ENCODE measurements at regions of chr14 and their contacts with region 1.

Region 1: DNA sequence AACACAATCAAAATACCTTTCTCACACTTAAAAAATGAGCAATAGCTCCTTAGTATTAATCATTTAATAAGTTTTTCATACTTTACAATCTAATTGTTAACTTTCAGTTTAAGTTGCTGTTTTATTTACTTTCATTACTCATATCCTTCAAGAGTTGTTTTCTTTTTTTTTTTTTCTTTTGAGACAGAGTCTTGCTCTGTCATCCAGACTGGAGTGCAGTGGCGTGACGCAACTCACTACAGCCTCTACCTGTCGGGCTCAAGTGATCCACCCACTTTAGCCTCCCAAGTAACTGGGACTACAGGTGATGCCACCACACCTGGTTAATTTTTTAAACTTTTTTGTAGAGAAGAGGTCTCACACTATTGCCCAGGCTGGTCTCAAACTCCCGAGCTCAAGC is 16.1 kb downstream of the ZBTB1 start:
- DNase-seq: no peak
- ATAC-seq: no peak
- H3K4me3 ChIP-seq: no peak overlapping the region
- H3K4me3 Mint-ChIP-seq: no peak overlapping the region
- H3K27ac ChIP-seq: no peak overlapping the region
- H3K27ac Mint-ChIP-seq: no peak overlapping the region
- H3K4me1 ChIP-seq: peaks cover 6 to 11% of the 10 kb centered on the region in 2 experiments
- H3K4me1 Mint-ChIP-seq: peaks cover 26 to 39% (median 35%) of the 10 kb centered on the region in 3 donors
- H3K27me3 ChIP-seq: no peaks in the 10 kb centered on the region
- H3K27me3 Mint-ChIP-seq: no peaks in the 10 kb centered on the region

Region 2: DNA sequence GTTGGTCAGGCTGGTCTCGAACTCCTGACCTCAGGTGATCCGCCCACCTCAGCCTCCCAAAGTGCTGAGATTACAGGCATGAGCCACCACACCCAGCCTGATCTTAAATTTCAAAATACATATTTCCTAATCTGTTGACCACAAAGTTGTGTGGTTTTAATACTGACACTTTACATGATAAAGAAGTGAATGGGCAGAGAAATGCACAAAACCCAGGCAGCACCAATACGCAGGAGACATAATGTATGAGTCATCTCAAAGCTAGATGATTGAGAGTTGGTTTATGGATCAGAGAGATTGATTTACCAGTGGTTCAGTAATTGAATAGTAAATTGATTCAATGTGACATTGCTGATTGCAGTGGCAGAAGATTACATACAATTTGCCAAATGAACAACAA is 958.3 kb before region 1 on chr14:
- CTCF ChIA-PET with region 1: no interaction called
- POLR2A ChIA-PET with region 1: interaction called in 1 of 2 experiments, 10 read pairs
- DNase-seq: no peak
- ATAC-seq: no peak
- H3K4me3 ChIP-seq: no peak overlapping the region
- H3K4me3 Mint-ChIP-seq: no peak overlapping the region
- H3K27ac ChIP-seq: no peak overlapping the region
- H3K27ac Mint-ChIP-seq: no peak overlapping the region
- H3K4me1 ChIP-seq: no peaks in the 10 kb centered on the region
- H3K4me1 Mint-ChIP-seq: no peaks in the 10 kb centered on the region
- H3K27me3 ChIP-seq: peaks cover 0 to 13% of the 10 kb centered on the region in 2 experiments
- H3K27me3 Mint-ChIP-seq: peaks cover 7 to 8% of the 10 kb centered on the region in 2 donors